Activated CD8-positive, alpha-beta memory T cell treated with anti-CD3 and anti-CD28 coated beads, Interleukin-2, amount 10 ng/mL, durations not matched to agents 7 days and 5 days (primary cell): ENCODE measurements at regions of chr12 and their contacts with region 1.

Region 1: GRCh38 chr12:9750276-9751203 is 10.2 kb downstream of the CD69 start:
- DNase-seq: peak; percentile 71
- ATAC-seq: peak; percentile 65
- H3K4me3 Mint-ChIP-seq: peak overlapping the region; percentile 37
- H3K27ac Mint-ChIP-seq: peak overlapping the region; percentile 61
- H3K4me1 Mint-ChIP-seq: peaks cover 52% of the 10 kb centered on the region
- H3K27me3 Mint-ChIP-seq: no peaks in the 10 kb centered on the region

Region 2: DNA sequence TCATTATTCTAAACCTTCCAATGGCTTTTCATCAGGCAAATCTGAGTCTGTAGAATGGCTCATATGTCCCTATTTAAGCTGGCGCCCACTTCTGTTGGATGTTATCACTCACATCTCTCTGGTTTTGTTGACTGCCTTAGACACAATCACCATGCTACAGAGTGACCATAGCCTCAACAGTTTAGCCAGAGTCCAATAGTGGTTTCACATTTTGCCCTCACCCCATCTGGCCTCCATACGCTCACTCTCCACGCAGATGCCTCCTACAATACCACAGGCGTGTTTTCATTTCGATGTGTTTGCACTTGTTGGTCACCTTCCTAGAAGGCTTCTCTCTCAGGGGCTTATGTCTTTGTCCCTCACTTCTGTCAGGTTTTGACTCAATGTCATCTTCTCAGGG is 146.3 kb before region 1 on chr12:
- CTCF ChIA-PET with region 1: no interaction called
- DNase-seq: no peak
- ATAC-seq: peak; percentile 42
- H3K4me3 Mint-ChIP-seq: peak overlapping the region; percentile 68
- H3K27ac Mint-ChIP-seq: peak overlapping the region; percentile 9
- H3K4me1 Mint-ChIP-seq: peaks cover 36% of the 10 kb centered on the region
- H3K27me3 Mint-ChIP-seq: no peaks in the 10 kb centered on the region

Region 3: DNA sequence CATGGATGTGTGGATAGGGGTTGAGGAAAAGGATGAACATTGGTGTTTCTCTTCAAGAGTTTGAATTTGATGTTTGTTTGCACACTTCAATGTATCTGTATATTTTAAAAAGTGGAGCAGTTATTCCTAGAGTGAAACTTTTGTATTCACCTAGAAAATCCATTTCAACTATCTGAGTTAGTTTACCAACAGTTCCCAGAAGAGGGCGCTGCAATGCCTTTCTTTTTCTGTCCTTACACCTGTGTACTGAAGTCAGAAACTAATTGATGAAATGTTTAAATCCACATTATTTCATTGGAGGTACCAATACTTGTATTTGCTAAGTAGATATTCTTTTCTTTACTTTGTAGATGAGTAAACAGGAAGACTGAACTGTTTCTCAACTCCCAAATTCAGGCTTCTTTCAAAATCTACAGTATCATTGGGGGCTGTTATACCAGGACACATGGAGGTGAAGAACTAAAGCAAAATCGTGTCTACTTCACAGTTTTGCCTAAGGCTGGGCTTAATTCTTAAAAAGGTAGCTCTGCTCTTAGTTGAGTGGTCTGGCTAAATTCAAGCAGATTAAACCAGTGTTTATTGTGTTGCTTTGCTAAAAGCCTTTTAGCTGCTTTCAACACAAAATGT is 116.2 kb before region 1 on chr12:
- CTCF ChIA-PET with region 1: interaction called, 12 read pairs
- DNase-seq: peak; percentile 85
- ATAC-seq: peak; percentile 75
- H3K4me3 Mint-ChIP-seq: no peak overlapping the region
- H3K27ac Mint-ChIP-seq: peak overlapping the region; percentile 39
- H3K4me1 Mint-ChIP-seq: peaks cover 33% of the 10 kb centered on the region
- H3K27me3 Mint-ChIP-seq: no peaks in the 10 kb centered on the region

Region 4: GRCh38 chr12:9660046-9660445 is 90.5 kb before region 1 on chr12:
- CTCF ChIA-PET with region 1: no interaction called
- DNase-seq: no peak
- ATAC-seq: no peak
- H3K4me3 Mint-ChIP-seq: no peak overlapping the region
- H3K27ac Mint-ChIP-seq: no peak overlapping the region
- H3K4me1 Mint-ChIP-seq: peaks cover 82% of the 10 kb centered on the region
- H3K27me3 Mint-ChIP-seq: no peaks in the 10 kb centered on the region

Region 5: DNA sequence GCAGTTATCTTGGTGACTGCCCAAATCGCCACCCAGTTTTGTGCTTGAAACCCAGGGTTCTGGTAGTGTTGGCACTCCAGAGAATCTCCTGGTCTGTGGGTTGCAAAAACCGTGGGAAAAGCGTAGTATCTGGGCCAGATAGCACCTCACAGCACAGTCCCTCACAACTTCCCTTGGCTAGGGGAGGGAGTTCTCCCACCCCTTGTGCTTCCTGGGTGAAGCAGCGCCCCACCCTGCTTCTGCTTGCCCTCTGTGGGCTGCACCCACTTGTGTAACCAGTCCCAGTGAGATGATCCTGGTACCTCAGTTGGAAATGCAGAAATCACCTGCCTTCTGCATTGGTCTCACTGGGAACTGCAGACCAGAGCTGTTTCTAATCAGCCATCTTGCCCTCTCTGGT is 64.6 kb before region 1 on chr12:
- CTCF ChIA-PET with region 1: no interaction called
- DNase-seq: no peak
- ATAC-seq: no peak
- H3K4me3 Mint-ChIP-seq: no peak overlapping the region
- H3K27ac Mint-ChIP-seq: peak overlapping the region; percentile 67
- H3K4me1 Mint-ChIP-seq: peaks cover 65% of the 10 kb centered on the region
- H3K27me3 Mint-ChIP-seq: no peaks in the 10 kb centered on the region

Region 6: DNA sequence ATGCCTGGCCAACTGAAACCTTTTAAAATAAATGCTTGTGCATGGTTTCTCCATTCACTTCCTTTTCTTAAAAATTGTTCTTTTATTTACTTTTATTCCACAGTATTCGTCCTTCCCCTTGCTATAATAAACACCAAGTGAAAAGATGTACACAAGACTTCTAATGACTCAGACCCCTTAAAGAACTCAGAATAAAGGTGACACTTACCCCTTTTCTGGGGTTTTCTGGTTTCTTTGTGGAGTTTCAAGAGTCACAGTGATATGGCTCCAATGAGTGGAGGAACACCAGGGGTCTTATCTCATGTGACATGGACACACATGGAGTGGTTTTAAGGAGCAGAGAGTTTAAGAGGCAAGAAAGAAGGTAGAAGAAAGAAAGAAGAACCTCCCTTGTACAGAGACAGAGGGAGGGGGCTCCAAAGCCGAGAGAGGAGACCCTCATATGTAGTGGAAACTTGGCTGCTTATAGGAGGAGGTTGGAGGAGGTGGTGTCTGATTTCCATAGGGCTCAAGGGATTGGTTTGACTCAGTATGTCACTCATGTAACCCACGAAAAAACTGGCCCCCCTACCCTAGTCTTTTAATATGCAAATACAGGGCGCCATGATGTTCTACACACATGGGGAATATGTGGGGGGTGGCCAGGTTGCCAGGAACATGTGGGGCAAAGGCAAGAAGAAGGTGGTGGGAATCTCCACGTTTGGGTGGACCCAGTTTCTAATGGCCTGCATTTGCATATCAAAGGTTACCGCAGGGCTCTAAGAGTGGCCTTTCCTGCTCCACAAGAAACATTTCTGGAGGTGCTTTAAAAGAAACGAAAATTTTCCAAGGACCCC is 32.2 kb after region 1 on chr12:
- CTCF ChIA-PET with region 1: no interaction called
- DNase-seq: no peak
- ATAC-seq: no peak
- H3K4me3 Mint-ChIP-seq: no peak overlapping the region
- H3K27ac Mint-ChIP-seq: no peak overlapping the region
- H3K4me1 Mint-ChIP-seq: peaks cover 41% of the 10 kb centered on the region
- H3K27me3 Mint-ChIP-seq: no peaks in the 10 kb centered on the region

Region 7: DNA sequence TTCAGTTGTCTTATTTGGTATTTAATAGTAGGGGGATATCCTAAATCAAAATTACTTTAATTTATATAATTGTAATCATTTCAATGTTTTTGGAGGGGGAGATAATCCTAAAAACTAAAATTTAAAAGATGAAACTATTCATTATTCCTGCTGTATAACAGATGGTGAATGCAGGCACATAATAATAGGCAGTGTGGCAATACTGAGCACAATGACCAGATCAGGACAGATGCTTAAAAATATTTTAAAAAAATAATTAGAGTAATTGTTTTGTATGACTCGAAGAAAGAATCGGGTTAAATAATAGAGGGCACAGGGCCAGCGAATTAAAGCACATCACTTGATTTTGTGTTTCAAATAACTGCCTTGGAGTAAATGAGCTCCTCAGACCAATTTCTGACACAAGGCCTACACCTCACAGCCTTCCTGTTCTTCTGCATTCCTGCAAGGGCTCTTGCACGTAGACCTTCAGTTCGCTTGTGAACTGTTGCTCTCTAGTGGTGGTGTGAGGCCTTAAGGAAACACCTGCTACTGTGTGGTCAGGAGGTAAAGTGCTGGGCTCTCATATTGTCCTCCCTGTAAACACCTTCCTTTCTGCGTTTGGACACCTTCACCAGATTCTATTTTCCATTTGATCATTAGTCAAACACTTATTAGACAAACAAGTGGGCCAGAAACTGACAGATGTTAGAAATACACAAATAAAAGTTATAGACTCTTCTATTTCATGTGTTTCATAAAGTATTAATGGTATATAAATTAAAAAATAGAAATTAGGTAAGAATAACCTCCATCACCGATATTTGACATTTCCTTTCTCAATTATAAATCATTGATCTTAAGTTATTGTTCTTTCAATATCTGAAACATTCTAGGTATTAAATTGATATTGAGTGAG is 47.4 kb after region 1 on chr12:
- CTCF ChIA-PET with region 1: interaction called, 503 read pairs
- DNase-seq: peak; percentile 88
- ATAC-seq: peak; percentile 86
- H3K4me3 Mint-ChIP-seq: peak overlapping the region; percentile 6
- H3K27ac Mint-ChIP-seq: peak overlapping the region; percentile 23
- H3K4me1 Mint-ChIP-seq: peaks cover 46% of the 10 kb centered on the region
- H3K27me3 Mint-ChIP-seq: no peaks in the 10 kb centered on the region

Region 8: DNA sequence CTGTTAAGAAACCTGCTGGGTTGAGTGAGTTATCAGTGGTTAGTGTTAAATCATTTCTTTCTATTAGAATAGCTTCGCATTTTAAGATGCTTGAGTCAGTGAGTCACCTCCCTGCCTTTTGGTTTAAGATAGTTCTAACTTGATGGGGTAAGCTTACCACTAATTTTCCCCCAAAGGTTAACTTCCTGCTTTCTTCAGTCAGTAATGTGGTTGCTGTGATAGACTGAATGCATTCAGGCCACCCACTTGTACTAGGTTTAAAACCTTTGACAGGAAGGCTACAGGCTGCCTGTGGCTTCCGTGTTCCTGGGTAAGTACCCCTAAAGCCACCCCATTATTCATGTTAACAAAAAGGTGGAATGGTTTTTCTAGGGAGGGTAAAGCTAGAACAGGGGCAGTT is 156.3 kb after region 1 on chr12:
- CTCF ChIA-PET with region 1: interaction called, 20 read pairs
- DNase-seq: peak; percentile 73
- ATAC-seq: peak; percentile 96
- H3K4me3 Mint-ChIP-seq: peak overlapping the region; percentile 21
- H3K27ac Mint-ChIP-seq: peak overlapping the region; percentile 85
- H3K4me1 Mint-ChIP-seq: peaks cover 35% of the 10 kb centered on the region
- H3K27me3 Mint-ChIP-seq: no peaks in the 10 kb centered on the region

Region 9: DNA sequence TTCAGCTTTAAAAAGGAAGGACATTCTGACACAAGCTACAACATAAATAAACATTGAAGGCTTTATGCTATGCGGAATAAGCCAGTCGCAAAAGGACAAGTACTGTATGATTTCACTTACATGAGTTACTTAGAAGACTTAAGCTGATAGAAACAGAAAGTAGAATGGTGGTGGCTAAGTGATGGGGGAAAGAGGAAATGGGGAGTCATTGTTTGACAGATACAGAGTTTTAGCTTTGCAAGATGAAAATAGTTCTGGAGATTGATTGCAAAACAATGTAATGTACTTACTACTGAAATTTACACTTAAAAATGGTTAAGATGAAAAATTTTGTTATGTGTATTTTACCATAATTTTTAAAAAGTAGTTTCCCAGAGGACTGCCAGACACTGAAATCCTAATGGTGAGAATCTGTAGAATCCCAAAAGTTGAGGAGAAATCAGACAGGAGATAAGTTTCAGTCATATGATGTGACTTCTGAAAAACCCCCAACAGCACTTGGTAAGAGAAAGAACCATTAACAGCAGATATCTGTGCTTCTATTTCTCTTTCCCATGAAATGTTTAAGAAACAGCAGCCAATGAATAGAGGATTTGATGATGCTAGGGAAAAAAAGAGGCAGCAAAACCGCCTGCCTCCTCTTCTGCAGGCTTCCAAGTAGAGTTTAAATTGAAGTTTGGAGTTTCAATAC is 198.2 kb after region 1 on chr12:
- CTCF ChIA-PET with region 1: interaction called, 11 read pairs
- DNase-seq: no peak
- ATAC-seq: peak; percentile 89
- H3K4me3 Mint-ChIP-seq: peak overlapping the region; percentile 26
- H3K27ac Mint-ChIP-seq: peak overlapping the region; percentile 79
- H3K4me1 Mint-ChIP-seq: peaks cover 50% of the 10 kb centered on the region
- H3K27me3 Mint-ChIP-seq: peaks cover 3% of the 10 kb centered on the region